PC-9 (cell line): ENCODE measurements at regions of chr19 and their contacts with region 1.

Region 1: GRCh38 chr19:6110360-6110977 is at the start of gene RFX2:
- DNase-seq: peak; percentile 86 to 97
- H3K4me3 ChIP-seq: peak within 1 kb of the TSS; percentile 60
- H3K27ac ChIP-seq: no peak within 1 kb of the TSS
- H3K4me1 ChIP-seq: 0 out of 2 replicates have a peak, but pooled peaks cover 5% of the 10 kb centered on the region
- H3K27me3 ChIP-seq: no peaks in the 10 kb centered on the region
- CTCF ChIP-seq: no peak
- total RNA-seq, gene RFX2: 8.7 and 11.6 TPM in 2 replicates

Region 2: DNA sequence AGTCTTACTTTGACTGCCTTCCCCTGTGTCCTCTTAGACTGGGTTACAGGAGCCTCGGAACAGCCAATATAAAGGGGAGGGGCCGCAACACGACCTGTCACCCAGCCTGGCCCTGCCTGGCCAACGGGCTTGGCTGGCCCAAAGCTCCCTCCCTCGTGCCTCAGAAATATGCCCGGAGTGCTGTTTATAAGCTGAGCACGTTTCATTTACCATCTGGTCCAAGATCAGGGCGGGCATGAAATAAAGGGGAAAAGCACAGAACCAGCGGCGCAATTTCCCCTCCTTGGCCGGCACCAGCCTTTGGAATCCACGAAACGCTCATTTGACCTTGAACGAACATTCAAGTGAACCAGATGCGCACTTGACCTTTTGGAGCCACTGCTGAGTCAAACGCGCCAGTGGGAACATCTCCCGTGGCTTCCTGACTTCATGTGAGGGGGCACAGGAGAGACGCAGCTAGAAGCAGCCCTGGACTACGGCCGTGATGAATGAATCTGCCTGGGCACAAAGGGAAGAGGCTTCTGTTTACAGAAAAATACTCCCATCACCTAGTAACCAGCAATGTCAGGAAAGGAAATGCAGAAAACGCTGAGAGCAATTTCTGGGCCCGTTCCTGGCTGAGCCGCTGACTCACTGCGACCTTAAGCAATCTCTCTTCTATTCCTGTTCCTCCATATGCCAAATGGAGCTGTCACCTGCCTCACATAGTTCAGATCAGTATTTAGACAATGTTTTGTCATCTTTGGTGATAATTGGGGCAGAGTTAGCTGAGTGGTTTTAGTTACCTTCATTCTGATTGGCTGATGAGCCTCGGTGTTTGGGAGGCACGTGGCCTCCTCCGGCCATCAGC is 53.4 kb before region 1 on chr19:
- CTCF ChIA-PET with region 1: interaction called, 4 read pairs
- POLR2A ChIA-PET with region 1: interaction called, 3 read pairs
- intact Hi-C with region 1: loop called (anchors 2 kb)
- DNase-seq: peak; percentile 74 to 96
- H3K4me3 ChIP-seq: peak overlapping the region; percentile 39; the same call in 1 of the 2 replicates
- H3K27ac ChIP-seq: peak overlapping the region; percentile 81
- H3K4me1 ChIP-seq: peaks cover 41% of the 10 kb centered on the region
- H3K27me3 ChIP-seq: no peaks in the 10 kb centered on the region
- CTCF ChIP-seq: no peak

Region 3: GRCh38 chr19:6362027-6362350 is 251.5 kb after region 1 on chr19:
- CTCF ChIA-PET with region 1: no interaction called
- POLR2A ChIA-PET with region 1: no interaction called
- intact Hi-C with region 1: no loop called
- DNase-seq: no peak
- H3K4me3 ChIP-seq: peak overlapping the region; percentile 61
- H3K27ac ChIP-seq: no peak overlapping the region
- H3K4me1 ChIP-seq: peaks cover 6% of the 10 kb centered on the region; the same call in 1 of the 2 replicates
- H3K27me3 ChIP-seq: no peaks in the 10 kb centered on the region
- CTCF ChIP-seq: no peak